Colonic mucosa (tissue), 4 donors: ENCODE measurements at regions of chrX and their contacts with region 1.

Region 1: DNA sequence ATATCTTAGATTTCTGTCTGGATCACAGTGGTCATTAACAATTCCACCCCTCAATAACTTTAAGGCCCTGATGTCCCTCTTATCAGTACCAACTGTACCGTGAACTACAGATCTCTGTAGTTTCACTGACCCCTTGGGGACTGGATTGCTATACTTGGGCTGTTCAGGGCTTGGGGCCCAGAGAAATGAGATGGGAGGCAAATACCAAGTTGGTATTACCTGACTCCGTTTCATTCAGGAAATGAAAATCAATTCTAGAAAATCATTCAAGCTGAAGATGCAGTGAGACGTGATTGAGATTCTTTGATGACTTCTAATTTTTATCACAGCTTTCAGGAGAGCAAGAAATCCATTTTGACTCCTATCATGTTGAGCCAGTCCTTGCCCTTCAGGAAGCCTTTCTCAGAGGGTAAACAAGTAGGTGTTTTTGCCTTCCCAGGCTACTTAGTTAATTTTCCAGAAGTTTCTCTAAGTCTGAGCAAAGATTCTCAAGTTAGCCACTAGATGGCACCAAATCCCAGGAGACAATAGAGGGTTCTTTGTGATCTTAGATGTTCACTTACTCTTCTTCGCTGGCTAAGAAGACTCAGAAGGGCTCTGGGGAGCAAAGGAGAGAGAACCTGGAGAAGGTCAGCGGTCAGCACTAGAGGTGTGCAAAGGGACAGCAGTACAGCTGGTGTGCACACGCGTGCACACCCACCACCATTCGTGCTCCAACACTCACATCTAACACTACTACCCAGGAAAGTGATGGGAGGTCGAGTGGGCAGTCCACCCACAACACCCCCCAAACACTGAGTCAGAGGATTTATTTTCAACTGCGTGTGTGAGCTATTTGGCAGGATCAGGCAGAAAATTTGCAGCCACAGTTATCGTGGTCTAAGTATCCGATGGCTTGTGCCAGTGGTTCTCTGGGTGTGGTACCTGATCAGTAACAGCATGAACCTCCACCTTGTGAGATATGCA is 7.4 kb downstream of the HNRNPH2 start:
- DNase-seq: peak; percentile 49
- H3K4me3 ChIP-seq: no peak overlapping the region
- H3K27ac ChIP-seq: peak overlapping the region; percentile 50
- H3K4me1 ChIP-seq: no peaks in the 10 kb centered on the region
- H3K27me3 ChIP-seq: no peaks in the 10 kb centered on the region
- CTCF ChIP-seq: peak; percentile 82

Region 2: DNA sequence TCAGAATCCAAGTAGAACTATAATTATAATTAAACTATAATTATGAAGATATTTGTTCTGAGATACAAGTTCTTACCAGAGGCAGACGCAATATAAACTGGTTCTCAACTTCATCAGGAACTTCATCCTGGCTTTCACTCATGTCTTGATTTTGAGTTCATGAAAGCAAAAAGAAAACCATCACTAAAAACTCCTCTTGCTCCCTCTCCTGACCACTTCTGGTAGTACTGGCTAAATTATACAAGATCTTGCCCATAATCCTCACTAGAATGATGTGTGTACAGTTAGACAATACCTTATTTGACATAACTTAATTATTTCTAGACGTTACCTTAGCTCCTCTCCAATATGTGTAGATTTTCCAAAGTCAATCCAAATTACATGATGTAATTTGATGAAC is 128.1 kb before region 1 on chrX:
- intact Hi-C with region 1: no loop called
- DNase-seq: peak; percentile 31
- H3K4me3 ChIP-seq: no peak overlapping the region
- H3K27ac ChIP-seq: no peak overlapping the region
- H3K4me1 ChIP-seq: no peaks in the 10 kb centered on the region
- H3K27me3 ChIP-seq: no peaks in the 10 kb centered on the region
- CTCF ChIP-seq: peak; percentile 69

Region 3: GRCh38 chrX:101595739-101596419 is 180.4 kb after region 1 on chrX:
- intact Hi-C with region 1: loop called (anchors 10 kb)
- DNase-seq: peak; percentile 48
- H3K4me3 ChIP-seq: no peak overlapping the region
- H3K27ac ChIP-seq: no peak overlapping the region
- H3K4me1 ChIP-seq: no peaks in the 10 kb centered on the region
- H3K27me3 ChIP-seq: no peaks in the 10 kb centered on the region
- CTCF ChIP-seq: peak; percentile 39

Region 4: GRCh38 chrX:101617211-101618191 is 202.0 kb after region 1 on chrX and contains the start of gene ARMCX6:
- intact Hi-C with region 1: loop called (anchors 5 kb)
- DNase-seq: peak; percentile 79
- H3K4me3 ChIP-seq: peak within 1 kb of the TSS; percentile 54
- H3K27ac ChIP-seq: peak within 1 kb of the TSS; percentile 56
- H3K4me1 ChIP-seq: no peaks in the 10 kb centered on the region
- H3K27me3 ChIP-seq: no peaks in the 10 kb centered on the region
- CTCF ChIP-seq: peak; percentile 31
- total RNA-seq, gene ARMCX6: 15.8 to 29.8 TPM

Region 5: GRCh38 chrX:101803451-101803850 is 388.0 kb after region 1 on chrX:
- intact Hi-C with region 1: loop called (anchors 5 kb)
- DNase-seq: no peak
- H3K4me3 ChIP-seq: no peak overlapping the region
- H3K27ac ChIP-seq: no peak overlapping the region
- H3K4me1 ChIP-seq: no peaks in the 10 kb centered on the region
- H3K27me3 ChIP-seq: no peaks in the 10 kb centered on the region
- CTCF ChIP-seq: peak; percentile 28